HCT116 (cell line): ENCODE measurements at regions of chr3 and their contacts with region 1.

Region 1: GRCh38 chr3:137792626-137793271 is 28.6 kb downstream of the SOX14 start:
- DNase-seq: peak; percentile 34
- ATAC-seq: peak; percentile 80
- H3K4me3 ChIP-seq: no peak overlapping the region
- H3K27ac ChIP-seq: no peak overlapping the region
- H3K4me1 ChIP-seq: no peaks in the 10 kb centered on the region
- H3K27me3 ChIP-seq: peaks cover 19% of the 10 kb centered on the region; the same call in 1 of the 2 replicates
- CTCF ChIP-seq: peak; percentile 62 to 85 (median 74); a peak in 5 of 6 replicates
- POLR2A ChIP-seq: no peak
- RAD21 ChIP-seq: peak; percentile 74

Region 2: DNA sequence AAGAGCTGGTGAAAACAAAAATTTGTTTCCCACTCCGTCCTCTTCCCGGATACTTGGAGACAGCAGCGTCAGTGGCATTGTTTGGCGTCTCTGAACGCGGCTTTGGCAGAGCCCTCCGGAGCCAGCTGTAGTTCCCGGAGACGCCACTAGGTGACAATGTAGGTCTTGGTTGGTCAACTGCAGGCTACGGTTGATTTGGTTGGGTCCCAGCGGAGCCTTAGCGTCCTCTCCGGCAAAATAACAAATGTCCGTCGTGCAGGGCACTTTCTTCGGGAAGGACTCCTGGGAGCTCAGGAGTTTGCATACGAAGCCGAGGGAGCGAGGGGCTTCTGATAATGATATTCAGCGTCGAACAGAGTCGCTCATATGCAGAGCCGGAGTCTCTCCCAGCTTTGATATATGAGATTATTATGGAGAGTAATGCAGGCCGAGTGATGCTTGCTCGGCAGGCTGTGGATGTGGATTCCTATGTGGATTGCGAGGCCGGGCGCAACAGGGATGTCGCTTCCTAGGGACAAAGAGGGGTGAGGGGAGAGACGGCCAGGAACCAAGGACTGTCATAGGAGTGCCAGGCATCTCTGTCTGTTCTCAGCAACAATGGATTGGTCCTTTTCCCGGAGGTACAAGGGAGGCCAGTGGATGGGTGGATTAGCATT is 760.2 kb before region 1 on chr3:
- CTCF ChIA-PET with region 1: no interaction called
- POLR2A ChIA-PET with region 1: no interaction called
- RAD21 ChIA-PET with region 1: no interaction called
- intact Hi-C with region 1: loop called (anchors 10 kb)
- DNase-seq: peak; percentile 68
- ATAC-seq: peak; percentile 90
- H3K4me3 ChIP-seq: peak overlapping the region; percentile 19 to 36; a peak in 3 of 4 replicates
- H3K27ac ChIP-seq: no peak overlapping the region
- H3K4me1 ChIP-seq: peaks cover 0 to 11% of the 10 kb centered on the region in 2 experiments; a peak in 2 of 4 replicates
- H3K27me3 ChIP-seq: no peaks in the 10 kb centered on the region
- CTCF ChIP-seq: peak; percentile 66 to 95 (median 87)
- POLR2A ChIP-seq: no peak
- RAD21 ChIP-seq: peak; percentile 84

Region 3: DNA sequence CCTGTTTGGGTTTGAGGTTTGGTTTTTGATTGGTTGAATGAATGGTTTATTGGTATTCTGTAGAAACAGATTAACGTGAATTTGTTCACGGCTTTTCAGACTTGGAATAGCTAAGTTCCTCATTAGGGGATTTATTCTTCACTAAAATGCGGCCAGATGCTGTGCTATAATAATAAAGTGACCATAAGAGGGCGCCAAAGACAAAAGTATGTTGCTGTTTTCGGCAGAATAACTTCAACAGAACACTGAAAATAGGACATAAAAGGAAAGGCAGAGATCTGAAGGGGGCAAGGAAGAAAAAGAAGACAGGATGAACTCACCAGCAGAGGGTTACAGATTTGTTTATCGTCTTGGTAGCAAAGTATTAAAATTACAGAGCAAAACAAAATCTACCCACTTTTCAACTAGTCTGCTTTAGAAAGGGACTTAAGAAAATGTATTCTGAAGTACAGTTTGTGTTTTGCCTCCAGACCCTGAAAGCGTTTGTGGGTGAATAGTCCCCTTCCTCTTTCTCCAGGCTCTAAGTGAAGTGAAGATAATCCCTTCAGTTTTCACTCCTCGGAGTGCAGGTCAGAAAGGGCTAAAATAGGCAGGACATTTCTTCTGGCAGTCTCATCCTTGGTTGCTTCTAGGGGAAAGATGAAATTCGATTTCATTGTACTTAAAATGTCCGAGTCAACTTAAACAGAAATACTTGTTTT is 687.3 kb before region 1 on chr3:
- CTCF ChIA-PET with region 1: no interaction called
- POLR2A ChIA-PET with region 1: no interaction called
- RAD21 ChIA-PET with region 1: no interaction called
- intact Hi-C with region 1: loop called (anchors 5 kb)
- DNase-seq: peak; percentile 52
- ATAC-seq: peak; percentile 82
- H3K4me3 ChIP-seq: no peak overlapping the region
- H3K27ac ChIP-seq: no peak overlapping the region
- H3K4me1 ChIP-seq: no peaks in the 10 kb centered on the region
- H3K27me3 ChIP-seq: peaks cover 37% of the 10 kb centered on the region
- CTCF ChIP-seq: peak; percentile 52 to 85 (median 70); a peak in 5 of 6 replicates
- POLR2A ChIP-seq: no peak
- RAD21 ChIP-seq: peak; percentile 81

Region 4: DNA sequence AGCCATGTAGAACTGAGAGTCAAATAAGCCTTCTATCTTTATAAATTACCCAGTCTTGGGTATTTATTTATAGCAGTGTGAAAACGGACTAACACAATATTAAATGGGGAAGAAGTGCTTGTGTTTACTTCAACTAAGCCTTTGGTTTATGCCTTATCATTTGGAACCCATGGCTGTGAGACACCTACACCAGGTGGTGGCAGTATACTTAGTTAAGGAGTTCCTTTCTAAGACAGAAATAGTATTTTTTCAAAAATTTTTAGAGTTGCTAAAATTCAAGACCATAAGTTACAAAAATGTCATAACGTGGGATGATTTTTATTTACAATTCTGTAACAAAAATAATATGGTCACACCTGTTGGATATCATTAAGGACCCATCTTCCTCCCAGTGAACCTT is 383.2 kb before region 1 on chr3:
- CTCF ChIA-PET with region 1: no interaction called
- POLR2A ChIA-PET with region 1: no interaction called
- RAD21 ChIA-PET with region 1: no interaction called
- intact Hi-C with region 1: loop called (anchors 2 kb)
- DNase-seq: no peak
- ATAC-seq: peak; percentile 47; the same call in 1 of the 2 replicates
- H3K4me3 ChIP-seq: no peak overlapping the region
- H3K27ac ChIP-seq: no peak overlapping the region
- H3K4me1 ChIP-seq: no peaks in the 10 kb centered on the region
- H3K27me3 ChIP-seq: no peaks in the 10 kb centered on the region
- CTCF ChIP-seq: peak; percentile 23 to 44 (median 39); a peak in 4 of 6 replicates
- POLR2A ChIP-seq: no peak
- RAD21 ChIP-seq: peak; percentile 16; the same call in 1 of the 2 replicates

Region 5: GRCh38 chr3:137709011-137709601 is 83.6 kb before region 1 on chr3:
- CTCF ChIA-PET with region 1: interaction called, 4 read pairs
- POLR2A ChIA-PET with region 1: no interaction called
- RAD21 ChIA-PET with region 1: no interaction called
- intact Hi-C with region 1: loop called (anchors 1 kb)
- DNase-seq: peak; percentile 10
- ATAC-seq: peak; percentile 49; the same call in 1 of the 2 replicates
- H3K4me3 ChIP-seq: no peak overlapping the region
- H3K27ac ChIP-seq: no peak overlapping the region
- H3K4me1 ChIP-seq: no peaks in the 10 kb centered on the region
- H3K27me3 ChIP-seq: no peaks in the 10 kb centered on the region
- CTCF ChIP-seq: peak; percentile 53 to 71 (median 70); a peak in 5 of 6 replicates
- POLR2A ChIP-seq: no peak
- RAD21 ChIP-seq: peak; percentile 60

Region 6: DNA sequence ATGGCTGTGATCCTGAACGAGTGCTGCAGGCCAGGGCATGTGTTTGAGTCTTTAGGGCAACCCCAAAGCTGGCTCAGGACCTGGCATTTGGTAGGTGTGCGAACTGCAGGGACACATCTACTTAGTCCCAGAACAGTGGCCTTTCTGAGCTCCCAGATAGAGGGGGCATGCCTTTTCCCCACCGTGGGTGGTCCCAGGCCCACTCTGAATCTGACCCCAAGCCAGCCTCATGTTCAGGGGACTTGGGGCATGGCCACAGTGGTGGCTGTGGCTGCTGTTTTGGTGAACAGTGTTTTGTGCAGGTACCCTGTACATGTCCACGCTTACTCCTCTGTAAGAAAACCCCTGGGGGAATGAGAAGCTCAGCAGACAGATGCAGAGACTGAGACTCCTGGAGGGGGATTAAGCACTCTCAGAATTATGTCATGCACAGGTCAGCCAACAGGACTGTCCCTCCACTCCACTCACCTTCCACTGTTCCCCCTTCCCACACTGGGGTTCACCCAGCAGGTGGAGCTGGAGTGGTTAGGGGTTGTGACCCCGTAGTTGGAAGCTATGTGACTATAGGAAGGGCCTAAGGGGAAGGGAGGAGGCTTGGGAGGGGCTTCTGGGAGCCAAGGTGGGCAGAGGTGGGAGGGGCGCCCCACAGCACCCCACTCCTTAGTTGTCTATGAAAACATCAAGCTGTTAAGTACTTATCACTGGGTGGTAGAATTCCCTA is 658.1 kb after region 1 on chr3:
- CTCF ChIA-PET with region 1: no interaction called
- POLR2A ChIA-PET with region 1: no interaction called
- RAD21 ChIA-PET with region 1: no interaction called
- intact Hi-C with region 1: no loop called
- DNase-seq: no peak
- ATAC-seq: no peak
- H3K4me3 ChIP-seq: no peak overlapping the region
- H3K27ac ChIP-seq: no peak overlapping the region
- H3K4me1 ChIP-seq: peaks cover 0 to under 1% of the 10 kb centered on the region in 2 experiments; a peak in 1 of 4 replicates
- H3K27me3 ChIP-seq: no peaks in the 10 kb centered on the region
- CTCF ChIP-seq: no peak
- POLR2A ChIP-seq: no peak
- RAD21 ChIP-seq: no peak